CD4-positive, alpha-beta memory T cell (primary cell): ENCODE measurements at regions of chr11 and their contacts with region 1.

Region 1: DNA sequence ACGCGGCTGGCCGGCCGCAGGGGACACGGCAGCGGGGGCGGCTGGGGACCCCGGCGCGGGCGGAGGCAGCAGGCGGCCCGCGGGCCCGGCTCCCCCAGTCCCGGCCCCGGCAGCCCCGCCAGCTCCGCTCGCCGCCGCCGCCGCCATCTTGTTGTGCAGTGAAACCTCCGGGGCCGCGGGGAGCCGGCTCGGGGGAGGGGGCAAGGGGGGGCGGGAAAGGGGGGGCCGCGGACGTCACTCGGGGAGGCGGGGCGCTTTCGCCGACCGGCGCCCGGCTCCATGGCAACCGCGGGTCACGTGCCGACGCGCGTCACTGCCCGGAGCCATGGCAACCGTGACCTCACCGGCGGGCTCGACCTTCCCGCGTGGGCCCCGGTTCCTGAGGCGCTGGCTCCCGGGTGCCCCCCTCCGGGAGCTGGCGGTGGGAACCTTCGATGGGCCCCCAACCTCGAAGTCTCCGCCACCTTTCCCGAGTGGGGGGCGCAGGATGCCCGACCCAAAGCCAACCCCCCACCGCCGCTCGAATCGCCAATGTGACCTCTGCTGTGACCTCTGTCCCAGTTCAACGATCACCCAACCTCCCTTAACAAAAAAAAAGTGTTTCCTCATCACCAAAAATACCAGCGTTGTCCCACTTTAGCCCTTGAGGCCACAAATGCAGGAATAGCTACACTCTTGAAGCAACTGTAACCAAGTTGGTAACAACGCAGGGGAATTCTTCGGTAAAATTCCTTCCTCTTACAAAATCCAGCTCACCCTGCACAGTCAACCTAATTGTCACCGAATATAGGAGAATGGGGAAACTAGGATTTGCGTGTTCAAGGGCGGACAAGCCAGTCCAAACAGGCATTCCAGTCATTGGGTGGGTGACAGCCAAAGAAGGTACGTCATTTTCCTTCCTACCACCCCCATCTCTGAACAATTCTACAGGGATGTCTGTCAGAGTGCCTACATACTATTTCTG is at the start of gene SIK3:
- DNase-seq: peak; percentile 92 to 95 (median 94)
- H3K4me3 ChIP-seq: peak within 1 kb of the TSS; percentile 79 to 86
- H3K4me3 Mint-ChIP-seq: peak within 1 kb of the TSS; percentile 95 to 100 (median 97)
- H3K27ac ChIP-seq: peak within 1 kb of the TSS; percentile 98
- H3K27ac Mint-ChIP-seq: peak within 1 kb of the TSS; percentile 99 to 100 (median 99)
- H3K4me1 ChIP-seq: peaks cover 47% of the 10 kb centered on the region
- H3K4me1 Mint-ChIP-seq: peaks cover 34 to 66% (median 46%) of the 10 kb centered on the region in 4 donors
- H3K27me3 ChIP-seq: no peaks in the 10 kb centered on the region
- H3K27me3 Mint-ChIP-seq: peaks cover 0 to 2% of the 10 kb centered on the region in 2 donors
- total RNA-seq, gene SIK3: 88.4 to 97.5 TPM

Region 2: DNA sequence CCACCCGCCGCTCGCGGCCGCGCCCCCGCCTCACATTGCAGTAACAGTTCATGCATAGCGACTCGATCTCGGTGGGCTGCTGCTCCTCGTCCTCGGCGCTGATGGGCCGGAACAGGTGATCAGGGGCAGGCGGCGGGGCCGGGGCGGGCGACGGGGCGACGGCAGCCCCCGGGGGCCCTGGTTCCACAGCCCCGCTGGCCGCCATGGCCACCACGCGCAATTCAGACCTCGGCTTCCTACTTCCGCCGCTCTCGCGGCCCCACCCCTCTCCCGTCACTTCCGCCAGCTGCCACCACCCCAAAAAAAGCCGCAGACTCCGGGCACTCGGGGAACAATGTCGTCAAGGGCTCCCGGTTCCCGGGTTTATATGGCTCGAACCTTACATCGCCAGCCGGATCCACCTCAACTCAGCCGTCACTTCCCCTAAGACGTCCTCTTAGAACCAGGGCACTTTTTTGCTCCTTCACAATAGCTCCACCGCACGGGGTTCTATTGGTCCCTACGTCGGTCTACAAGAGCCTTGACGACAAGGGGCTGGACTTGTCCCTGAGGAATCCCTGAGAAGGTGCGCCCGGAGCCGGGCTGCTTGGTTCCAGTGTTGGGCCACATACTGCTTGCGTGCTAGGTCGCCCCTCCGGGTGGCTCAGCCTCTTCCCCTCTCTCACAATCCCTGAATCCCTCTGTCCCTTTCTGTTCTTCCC is 310.6 kb before region 1 on chr11 and contains the start of gene ZPR1:
- CTCF ChIA-PET with region 1: interaction called, 212 read pairs
- POLR2A ChIA-PET with region 1: interaction called, 15 read pairs
- intact Hi-C with region 1: loop called (anchors 1 kb)
- DNase-seq: peak; percentile 86 to 89 (median 86)
- H3K4me3 ChIP-seq: peak within 1 kb of the TSS; percentile 55 to 90
- H3K4me3 Mint-ChIP-seq: peak within 1 kb of the TSS; percentile 91 to 98 (median 97)
- H3K27ac ChIP-seq: peak within 1 kb of the TSS; percentile 84
- H3K27ac Mint-ChIP-seq: peak within 1 kb of the TSS; percentile 96 to 99 (median 98)
- H3K4me1 ChIP-seq: peaks cover 40% of the 10 kb centered on the region
- H3K4me1 Mint-ChIP-seq: peaks cover 30 to 66% (median 45%) of the 10 kb centered on the region in 4 donors
- H3K27me3 ChIP-seq: no peaks in the 10 kb centered on the region
- H3K27me3 Mint-ChIP-seq: peaks cover 0 to 2% of the 10 kb centered on the region in 2 donors
- total RNA-seq, gene ZPR1: 59.5 to 73.4 TPM

Region 3: GRCh38 chr11:116853461-116854073 is 245.0 kb before region 1 on chr11:
- CTCF ChIA-PET with region 1: interaction called, 9 read pairs
- POLR2A ChIA-PET with region 1: interaction called, 37 read pairs
- intact Hi-C with region 1: loop called (anchors 2 kb)
- DNase-seq: peak; percentile 81 to 91 (median 85)
- H3K4me3 ChIP-seq: peak overlapping the region; percentile 8 to 38
- H3K4me3 Mint-ChIP-seq: peak overlapping the region; percentile 53 to 90 (median 77)
- H3K27ac ChIP-seq: peak overlapping the region; percentile 52
- H3K27ac Mint-ChIP-seq: peak overlapping the region; percentile 83 to 98 (median 95)
- H3K4me1 ChIP-seq: peaks cover 81% of the 10 kb centered on the region
- H3K4me1 Mint-ChIP-seq: peaks cover 67 to 84% (median 74%) of the 10 kb centered on the region in 4 donors
- H3K27me3 ChIP-seq: no peaks in the 10 kb centered on the region
- H3K27me3 Mint-ChIP-seq: no peaks in the 10 kb centered on the region

Region 4: GRCh38 chr11:116927163-116927974 is 171.2 kb before region 1 on chr11:
- CTCF ChIA-PET with region 1: interaction called, 38 read pairs
- POLR2A ChIA-PET with region 1: interaction called, 92 read pairs
- intact Hi-C with region 1: loop called (anchors 1 kb)
- DNase-seq: peak; percentile 45 to 78 (median 57)
- H3K4me3 ChIP-seq: peak overlapping the region in 1 of 2 donors; percentile 24
- H3K4me3 Mint-ChIP-seq: peak overlapping the region; percentile 47 to 88 (median 74)
- H3K27ac ChIP-seq: peak overlapping the region; percentile 87
- H3K27ac Mint-ChIP-seq: peak overlapping the region; percentile 92 to 99 (median 97)
- H3K4me1 ChIP-seq: peaks cover 93% of the 10 kb centered on the region
- H3K4me1 Mint-ChIP-seq: peaks cover 64 to 91% (median 76%) of the 10 kb centered on the region in 4 donors
- H3K27me3 ChIP-seq: no peaks in the 10 kb centered on the region
- H3K27me3 Mint-ChIP-seq: no peaks in the 10 kb centered on the region

Region 5: GRCh38 chr11:117037279-117037974 is 61.1 kb before region 1 on chr11:
- CTCF ChIA-PET with region 1: interaction called, 5 read pairs
- POLR2A ChIA-PET with region 1: no interaction called
- intact Hi-C with region 1: loop called (anchors 5 kb)
- DNase-seq: peak in 4 of 5 donors; percentile 35 to 53 (median 42)
- H3K4me3 ChIP-seq: no peak overlapping the region
- H3K4me3 Mint-ChIP-seq: peak overlapping the region in 7 of 8 donors; percentile 7 to 80 (median 52)
- H3K27ac ChIP-seq: no peak overlapping the region
- H3K27ac Mint-ChIP-seq: peak overlapping the region; percentile 83 to 96 (median 84)
- H3K4me1 ChIP-seq: peaks cover 58% of the 10 kb centered on the region
- H3K4me1 Mint-ChIP-seq: peaks cover 48 to 74% (median 61%) of the 10 kb centered on the region in 4 donors
- H3K27me3 ChIP-seq: no peaks in the 10 kb centered on the region
- H3K27me3 Mint-ChIP-seq: no peaks in the 10 kb centered on the region

Region 6: GRCh38 chr11:117143871-117144476 is 45.4 kb after region 1 on chr11 and contains the start of gene PAFAH1B2:
- CTCF ChIA-PET with region 1: no interaction called
- POLR2A ChIA-PET with region 1: interaction called, 5 read pairs
- intact Hi-C with region 1: loop called (anchors 5 kb)
- DNase-seq: peak; percentile 94 to 95 (median 94)
- H3K4me3 ChIP-seq: peak within 1 kb of the TSS; percentile 68 to 93
- H3K4me3 Mint-ChIP-seq: peak within 1 kb of the TSS; percentile 97 to 100 (median 99)
- H3K27ac ChIP-seq: peak within 1 kb of the TSS; percentile 70
- H3K27ac Mint-ChIP-seq: peak within 1 kb of the TSS; percentile 92 to 99 (median 98)
- H3K4me1 ChIP-seq: peaks cover 46% of the 10 kb centered on the region
- H3K4me1 Mint-ChIP-seq: peaks cover 33 to 56% (median 44%) of the 10 kb centered on the region in 4 donors
- H3K27me3 ChIP-seq: no peaks in the 10 kb centered on the region
- H3K27me3 Mint-ChIP-seq: peaks cover 2 to 6% of the 10 kb centered on the region in 2 donors
- total RNA-seq, gene PAFAH1B2: 61.6 to 64.2 TPM